Calu3 (cell line): ENCODE measurements at regions of chr20 and their contacts with region 1.

Region 1: DNA sequence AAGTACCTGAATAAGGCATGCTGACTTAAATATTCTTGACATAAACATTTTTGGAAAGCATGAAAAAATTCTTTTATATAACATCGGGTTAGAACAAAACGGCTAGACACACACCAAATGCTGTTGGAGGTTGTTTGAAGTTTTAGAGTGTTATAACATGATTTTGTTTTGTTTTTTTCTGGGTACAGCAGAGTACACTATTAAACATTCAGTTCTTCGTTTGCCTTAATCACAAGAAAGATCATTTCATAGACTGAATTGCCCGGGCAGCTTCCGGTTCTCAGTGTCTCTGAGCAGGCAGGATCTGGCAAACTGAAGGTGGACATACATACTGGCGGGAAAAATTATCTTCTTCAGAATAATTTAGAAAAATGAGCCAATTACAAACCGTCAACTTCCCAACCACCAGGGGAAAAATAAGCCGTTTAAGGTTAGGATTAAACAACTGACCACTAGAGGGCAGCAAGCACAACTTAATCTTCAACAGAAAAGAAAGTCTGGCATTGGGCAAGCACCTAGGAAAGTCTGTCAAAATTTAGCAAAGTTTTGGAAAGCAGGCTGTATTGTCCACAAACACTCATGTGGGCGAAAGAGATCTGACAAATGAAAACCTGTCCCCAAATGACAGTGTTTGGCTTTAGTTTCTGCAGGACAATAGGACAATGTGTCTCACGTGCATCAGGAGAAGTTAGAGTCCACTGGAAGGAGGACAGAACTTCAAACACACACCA is 15.0 kb downstream of the ZNF217 start:
- DNase-seq: peak; percentile 81
- H3K4me3 Mint-ChIP-seq: peak overlapping the region; percentile 63
- H3K27ac Mint-ChIP-seq: peak overlapping the region; percentile 80
- H3K4me1 Mint-ChIP-seq: peaks cover 60% of the 10 kb centered on the region
- H3K27me3 Mint-ChIP-seq: no peaks in the 10 kb centered on the region
- CTCF ChIP-seq: peak; percentile 95

Region 2: GRCh38 chr20:53336778-53337291 is 241.8 kb before region 1 on chr20:
- CTCF ChIA-PET with region 1: no interaction called
- intact Hi-C with region 1: no loop called
- DNase-seq: no peak
- H3K4me3 Mint-ChIP-seq: no peak overlapping the region
- H3K27ac Mint-ChIP-seq: no peak overlapping the region
- H3K4me1 Mint-ChIP-seq: peaks cover 6% of the 10 kb centered on the region
- H3K27me3 Mint-ChIP-seq: peaks cover 29% of the 10 kb centered on the region
- CTCF ChIP-seq: no peak

Region 3: DNA sequence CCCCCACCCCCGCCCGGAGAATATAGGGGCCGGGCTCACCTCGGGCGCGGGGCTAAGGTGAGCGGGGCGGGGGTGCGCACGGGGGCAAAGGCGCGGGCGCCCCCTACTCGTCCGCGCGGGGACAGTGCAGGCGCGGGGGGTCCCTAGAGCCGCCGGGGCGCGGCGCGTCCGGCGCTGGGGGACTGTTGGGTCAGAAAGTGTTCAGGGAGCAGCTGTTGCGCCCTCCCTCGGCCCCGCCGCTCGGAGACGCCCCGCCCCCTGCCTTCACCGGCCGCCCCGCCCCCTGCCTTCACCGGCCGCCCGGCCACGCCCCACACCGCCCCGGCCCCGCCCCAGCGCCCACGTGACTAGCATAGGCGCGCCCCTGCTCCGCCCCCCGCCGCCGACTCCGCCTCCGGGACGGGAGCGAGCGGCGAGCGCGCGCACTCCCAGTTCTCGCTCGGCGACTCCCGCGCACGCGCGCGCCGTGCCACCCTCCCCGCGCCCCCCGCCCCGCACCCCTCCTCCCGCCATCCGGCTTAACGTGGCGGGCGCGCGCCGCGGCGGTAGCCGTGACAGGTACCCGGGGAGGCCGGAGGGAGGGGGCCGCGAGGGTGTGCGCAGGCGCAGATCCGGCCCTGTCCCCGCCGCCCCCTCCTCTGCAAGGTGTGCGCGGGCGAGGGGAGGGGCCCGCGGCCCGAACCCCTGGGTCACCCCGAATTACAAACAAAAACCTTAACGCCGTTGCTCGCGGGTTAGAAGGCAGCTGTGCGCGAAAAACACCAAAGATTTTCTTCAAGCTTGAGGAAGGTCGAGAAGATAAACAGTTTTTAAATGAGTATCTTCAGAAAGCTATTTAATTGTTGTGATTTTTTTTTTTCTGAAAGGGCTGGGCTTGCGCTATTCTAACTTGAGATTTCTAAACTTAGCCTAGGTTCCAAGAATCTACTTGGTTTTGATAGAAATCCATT is 15.7 kb after region 1 on chr20:
- CTCF ChIA-PET with region 1: interaction called, 6 read pairs
- intact Hi-C with region 1: loop called (anchors 2 kb)
- DNase-seq: peak; percentile 100
- H3K4me3 Mint-ChIP-seq: peak overlapping the region; percentile 69
- H3K27ac Mint-ChIP-seq: peak overlapping the region; percentile 86
- H3K4me1 Mint-ChIP-seq: peaks cover 65% of the 10 kb centered on the region
- H3K27me3 Mint-ChIP-seq: no peaks in the 10 kb centered on the region
- CTCF ChIP-seq: peak; percentile 53

Region 4: GRCh38 chr20:53643031-53643832 is 64.6 kb after region 1 on chr20:
- CTCF ChIA-PET with region 1: interaction called, 6 read pairs
- intact Hi-C with region 1: loop called (anchors 1 kb)
- DNase-seq: peak; percentile 75
- H3K4me3 Mint-ChIP-seq: peak overlapping the region; percentile 50
- H3K27ac Mint-ChIP-seq: peak overlapping the region; percentile 89
- H3K4me1 Mint-ChIP-seq: peaks cover 9% of the 10 kb centered on the region
- H3K27me3 Mint-ChIP-seq: no peaks in the 10 kb centered on the region
- CTCF ChIP-seq: no peak

Region 5: DNA sequence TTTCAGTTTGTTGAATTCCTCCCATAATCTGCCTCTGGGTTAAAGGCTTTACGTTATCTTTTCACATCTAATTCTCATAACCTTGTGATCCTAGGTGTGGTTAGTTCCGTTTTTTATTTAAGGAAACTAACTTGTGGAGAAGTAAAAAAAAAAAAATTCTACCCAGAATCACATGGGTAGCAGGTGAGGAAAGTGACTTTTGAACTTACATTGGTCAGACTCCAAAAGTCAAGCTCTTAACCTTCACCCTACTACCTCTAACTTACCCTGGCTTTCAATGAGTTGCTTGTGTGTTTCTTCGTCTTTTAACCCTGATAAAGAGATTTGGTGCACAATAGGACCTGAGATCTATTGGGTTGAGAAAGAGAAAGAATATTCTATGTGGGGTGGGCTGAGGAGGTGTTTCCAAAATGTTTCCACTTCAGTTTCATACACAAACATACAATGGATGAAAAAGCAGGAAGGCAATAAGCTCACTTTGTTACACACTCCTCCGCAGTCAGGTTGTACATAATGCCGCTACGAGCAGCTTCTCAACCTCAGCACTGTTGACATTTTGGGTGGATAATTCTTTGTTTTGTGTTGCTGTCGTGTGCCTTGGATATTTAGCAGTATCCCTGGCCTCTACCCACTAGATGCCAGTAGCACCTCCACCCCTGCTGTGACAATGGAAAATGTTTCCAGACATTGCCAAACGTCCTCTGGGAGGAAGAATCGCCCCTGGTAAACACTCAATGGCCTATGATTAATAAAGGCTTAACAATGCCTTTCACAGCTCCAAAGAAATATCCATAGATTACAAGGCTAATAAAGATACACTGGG is 208.0 kb after region 1 on chr20:
- CTCF ChIA-PET with region 1: no interaction called
- intact Hi-C with region 1: loop called (anchors 5 kb)
- DNase-seq: peak; percentile 37
- H3K4me3 Mint-ChIP-seq: peak overlapping the region; percentile 51
- H3K27ac Mint-ChIP-seq: peak overlapping the region; percentile 78
- H3K4me1 Mint-ChIP-seq: peaks cover 42% of the 10 kb centered on the region
- H3K27me3 Mint-ChIP-seq: no peaks in the 10 kb centered on the region
- CTCF ChIP-seq: no peak

Region 6: DNA sequence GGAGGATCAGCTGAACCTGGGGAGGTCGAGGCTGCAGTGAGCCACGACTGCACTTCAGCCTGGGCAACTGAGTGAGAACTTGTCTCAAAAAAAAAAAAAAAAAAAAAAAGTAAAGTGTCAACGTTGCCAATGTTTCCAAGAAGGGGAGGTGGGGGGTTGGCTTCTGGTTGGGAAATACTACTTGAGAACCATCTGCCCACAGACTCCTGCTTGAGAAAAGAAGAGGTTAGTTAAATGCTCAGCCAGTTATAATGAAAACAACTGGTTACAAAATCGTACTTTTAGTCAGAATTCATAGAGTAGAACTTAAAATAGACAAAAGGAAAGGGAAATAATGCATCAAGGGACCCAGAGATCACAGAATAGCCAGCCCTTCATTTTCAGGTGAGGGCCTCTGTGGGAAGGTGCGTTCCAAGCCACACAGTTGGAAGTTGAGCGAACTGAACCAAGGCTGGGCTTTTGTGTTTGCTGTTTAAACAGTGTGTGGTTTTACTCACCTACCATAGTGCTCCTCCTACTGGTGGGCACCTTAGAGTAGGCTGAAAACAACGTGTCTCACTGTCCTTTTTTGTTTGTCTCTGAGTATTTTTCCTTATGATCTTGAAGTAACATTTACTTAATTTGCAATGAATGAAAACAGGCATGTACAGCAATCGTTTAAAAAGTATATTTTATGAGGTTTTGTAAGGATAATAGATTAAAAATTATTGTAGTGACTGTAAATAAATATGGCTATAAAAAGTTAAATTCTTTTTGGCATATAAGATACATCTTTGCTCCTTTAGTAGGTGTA is 291.0 kb after region 1 on chr20:
- CTCF ChIA-PET with region 1: interaction called, 3 read pairs
- intact Hi-C with region 1: loop called (anchors 1 kb)
- DNase-seq: peak; percentile 90
- H3K4me3 Mint-ChIP-seq: no peak overlapping the region
- H3K27ac Mint-ChIP-seq: peak overlapping the region; percentile 80
- H3K4me1 Mint-ChIP-seq: peaks cover 76% of the 10 kb centered on the region
- H3K27me3 Mint-ChIP-seq: no peaks in the 10 kb centered on the region
- CTCF ChIP-seq: peak; percentile 77